Heart right ventricle (tissue), 16 donors: ENCODE measurements at regions of chr15 and their contacts with region 1.

Region 1: GRCh38 chr15:82843566-82843965 is 34.1 kb downstream of the WHAMM start:
- DNase-seq: no peak
- ATAC-seq: no peak
- H3K4me3 ChIP-seq: no peak overlapping the region
- H3K27ac ChIP-seq: no peak overlapping the region
- H3K4me1 ChIP-seq: peaks cover 0 to 6% (median 0%) of the 10 kb centered on the region in 9 donors
- H3K27me3 ChIP-seq: no peaks in the 10 kb centered on the region
- CTCF ChIP-seq: no peak

Region 2: DNA sequence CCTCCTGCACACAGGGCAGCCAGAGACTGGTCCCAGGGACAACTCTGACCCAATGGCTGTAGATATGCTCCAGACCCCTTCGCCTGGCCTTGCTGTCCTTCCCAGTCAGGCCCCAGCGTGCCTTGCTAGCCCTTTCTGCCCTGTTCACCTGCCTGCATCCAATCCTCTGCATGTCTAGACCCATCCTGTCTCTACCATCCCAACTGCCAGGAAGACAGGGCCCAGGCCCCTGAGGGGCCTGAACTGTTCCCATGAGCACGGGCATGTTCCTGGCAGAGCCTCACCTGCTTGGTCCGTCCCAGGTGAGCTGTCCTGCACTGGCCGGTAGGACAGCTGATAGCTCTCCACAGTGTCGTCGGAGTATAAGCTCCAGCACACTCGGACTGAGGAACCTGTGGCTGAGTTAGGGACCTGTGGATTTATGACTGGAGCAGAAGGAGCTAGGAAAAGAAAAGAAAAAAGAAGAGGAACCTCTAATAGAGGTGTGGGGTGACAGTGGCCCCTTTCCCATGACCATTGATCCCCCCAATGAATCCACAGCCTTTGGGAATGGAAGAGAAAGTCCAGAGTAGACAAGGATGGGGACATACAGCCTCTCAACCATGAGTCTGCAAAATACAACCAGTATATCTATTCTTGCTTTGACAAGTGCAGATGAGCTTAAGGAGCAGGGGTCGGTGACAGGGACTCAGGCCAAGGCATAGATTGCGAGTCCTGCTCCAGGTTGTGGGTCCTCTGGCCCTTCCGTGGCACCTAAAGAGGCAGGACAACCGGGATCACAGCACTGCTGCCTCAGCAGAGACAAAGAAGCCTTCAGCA is 71.6 kb before region 1 on chr15:
- intact Hi-C with region 1: loop called in 1 of 10 experiments (anchors 2 kb)
- DNase-seq: no peak
- ATAC-seq: peak in 1 of 8 donors; percentile 41
- H3K4me3 ChIP-seq: no peak overlapping the region
- H3K27ac ChIP-seq: no peak overlapping the region
- H3K4me1 ChIP-seq: no peaks in the 10 kb centered on the region
- H3K27me3 ChIP-seq: no peaks in the 10 kb centered on the region
- CTCF ChIP-seq: no peak

Region 3: DNA sequence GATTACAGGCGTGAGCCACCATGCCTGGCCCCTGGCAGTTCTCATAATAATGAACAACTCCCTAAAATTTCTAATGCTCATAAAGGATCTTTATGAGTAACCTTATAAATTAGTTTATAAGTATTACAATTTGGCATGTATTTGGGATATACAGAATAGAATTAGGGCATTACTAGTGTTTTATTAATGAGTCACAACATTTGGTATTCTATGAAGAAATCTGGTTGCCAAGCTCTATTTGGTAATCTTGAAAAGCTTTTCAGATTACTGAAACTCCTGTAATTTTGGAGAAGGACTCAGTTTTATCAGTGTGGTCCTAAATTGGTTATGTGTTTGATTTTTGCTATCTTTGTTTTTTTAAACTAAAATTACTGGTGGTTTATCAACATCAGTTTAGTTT is 309.7 kb after region 1 on chr15:
- intact Hi-C with region 1: loop called in 1 of 10 experiments (anchors 5 kb)
- DNase-seq: no peak
- ATAC-seq: no peak
- H3K4me3 ChIP-seq: no peak overlapping the region
- H3K27ac ChIP-seq: no peak overlapping the region
- H3K4me1 ChIP-seq: no peaks in the 10 kb centered on the region
- H3K27me3 ChIP-seq: no peaks in the 10 kb centered on the region
- CTCF ChIP-seq: no peak